ENCODE measurements at regions of chr11 and their contacts with region 1.

Region 1: GRCh38 chr11:119684361-119685110 is 44.5 kb downstream of the NECTIN1 start:
- DNase-seq: peak; percentile 65
- H3K4me3 ChIP-seq: no peak overlapping the region
- H3K27ac ChIP-seq: peak overlapping the region; percentile 84
- H3K4me1 ChIP-seq: peaks cover 17% of the 10 kb centered on the region
- H3K27me3 ChIP-seq: no peaks in the 10 kb centered on the region
- CTCF ChIP-seq: no peak
- POLR2A ChIP-seq: no peak

Region 2: DNA sequence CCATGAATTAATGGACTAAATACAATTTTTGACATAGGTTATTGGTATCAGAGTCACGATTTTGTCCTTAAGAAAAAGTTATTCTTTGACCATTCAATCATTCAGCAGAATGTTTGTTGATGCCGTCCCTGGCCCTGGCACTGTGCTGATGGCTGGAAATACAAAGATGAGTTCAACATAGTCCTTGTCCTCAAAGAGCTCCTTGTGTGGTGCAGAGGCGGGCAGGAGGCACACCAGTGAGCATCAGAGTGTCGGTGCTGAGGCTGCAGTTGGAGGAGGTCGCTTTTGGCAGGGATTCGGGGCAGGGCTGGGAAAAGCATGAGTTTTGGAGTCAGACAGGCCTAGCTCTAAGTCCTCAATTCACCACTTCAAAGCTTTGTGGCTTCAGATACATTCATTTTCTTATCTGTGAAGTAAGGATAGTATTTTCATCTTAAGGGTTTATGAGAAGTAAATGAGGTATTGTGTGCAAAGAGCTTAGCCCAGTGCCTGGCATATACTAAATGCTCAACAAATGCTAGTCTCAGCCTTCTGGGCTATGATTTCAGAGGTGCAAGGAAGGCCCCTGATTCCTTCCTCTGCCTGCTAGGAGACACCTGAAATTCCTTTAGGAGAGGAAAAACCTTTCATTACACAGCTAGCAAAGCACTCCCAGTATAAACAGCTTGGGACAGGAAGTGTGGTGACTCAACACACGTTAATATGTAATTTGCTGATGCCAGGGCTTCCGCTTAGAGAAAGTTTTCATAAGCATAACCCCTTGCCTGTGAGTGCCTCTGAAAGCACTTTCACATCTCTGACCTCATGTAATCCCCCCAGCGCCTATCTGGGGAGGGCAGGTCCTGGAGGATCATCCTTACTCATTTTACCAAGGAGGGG is 69.3 kb before region 1 on chr11:
- CTCF ChIA-PET with region 1: no interaction called
- POLR2A ChIA-PET with region 1: no interaction called
- dilution Hi-C with region 1: no loop called
- intact Hi-C with region 1: no loop called
- DNase-seq: peak; percentile 88
- H3K4me3 ChIP-seq: no peak overlapping the region
- H3K27ac ChIP-seq: peak overlapping the region; percentile 89
- H3K4me1 ChIP-seq: peaks cover 44% of the 10 kb centered on the region
- H3K27me3 ChIP-seq: no peaks in the 10 kb centered on the region
- CTCF ChIP-seq: no peak
- POLR2A ChIP-seq: peak; percentile 53

Region 3: GRCh38 chr11:119673759-119674336 is 10.7 kb before region 1 on chr11:
- CTCF ChIA-PET with region 1: interaction called, 5 read pairs
- POLR2A ChIA-PET with region 1: no interaction called
- dilution Hi-C with region 1: no loop called
- intact Hi-C with region 1: loop called (anchors 1 kb)
- DNase-seq: no peak
- H3K4me3 ChIP-seq: no peak overlapping the region
- H3K27ac ChIP-seq: no peak overlapping the region
- H3K4me1 ChIP-seq: peaks cover 26% of the 10 kb centered on the region
- H3K27me3 ChIP-seq: no peaks in the 10 kb centered on the region
- CTCF ChIP-seq: no peak
- POLR2A ChIP-seq: no peak

Region 4: GRCh38 chr11:119721129-119722120 is 36.9 kb after region 1 on chr11:
- CTCF ChIA-PET with region 1: interaction called, 4 read pairs
- POLR2A ChIA-PET with region 1: no interaction called
- dilution Hi-C with region 1: no loop called
- intact Hi-C with region 1: loop called (anchors 2 kb)
- DNase-seq: peak; percentile 45
- H3K4me3 ChIP-seq: no peak overlapping the region
- H3K27ac ChIP-seq: no peak overlapping the region
- H3K4me1 ChIP-seq: peaks cover 15% of the 10 kb centered on the region
- H3K27me3 ChIP-seq: no peaks in the 10 kb centered on the region
- CTCF ChIP-seq: peak; percentile 41
- POLR2A ChIP-seq: no peak